Caco-2 (cell line): ENCODE measurements at regions of chr7 and their contacts with region 1.

Region 1: DNA sequence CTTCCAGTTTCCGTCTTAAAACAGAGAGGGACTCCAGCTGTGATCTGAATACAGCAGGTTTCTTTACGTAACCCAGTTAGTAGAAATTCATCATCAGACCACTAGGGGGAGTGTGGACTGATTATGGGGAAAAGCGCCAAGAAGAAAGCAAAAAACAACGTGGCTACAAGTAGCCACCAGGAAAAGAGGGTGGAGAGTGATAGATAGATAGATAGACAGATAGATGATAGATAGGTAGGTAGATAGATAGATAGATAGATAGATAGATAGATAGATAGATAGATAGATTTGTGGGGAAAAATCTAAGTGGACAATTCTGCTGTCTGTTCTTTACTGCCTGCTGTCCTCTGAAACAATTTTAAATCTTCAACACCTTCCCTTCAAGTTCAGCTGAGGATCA is 12.7 kb upstream of the AKR1B10 start:
- DNase-seq: peak in 1 of 2 experiments; percentile 76
- H3K4me3 ChIP-seq: no peak overlapping the region
- H3K4me3 Mint-ChIP-seq: no peak overlapping the region
- H3K27ac Mint-ChIP-seq: no peak overlapping the region
- H3K4me1 ChIP-seq: no peaks in the 10 kb centered on the region; the same call in 1 of the 2 replicates
- H3K4me1 Mint-ChIP-seq: peaks cover 7% of the 10 kb centered on the region
- H3K27me3 ChIP-seq: no peaks in the 10 kb centered on the region
- H3K27me3 Mint-ChIP-seq: peaks cover 14% of the 10 kb centered on the region
- CTCF ChIP-seq: peak; percentile 86 to 87

Region 2: GRCh38 chr7:134444198-134444871 is 70.3 kb before region 1 on chr7:
- CTCF ChIA-PET with region 1: interaction called, 5 read pairs
- POLR2A ChIA-PET with region 1: no interaction called
- intact Hi-C with region 1: loop called (anchors 2 kb)
- DNase-seq: peak in 1 of 2 experiments; percentile 32
- H3K4me3 ChIP-seq: no peak overlapping the region
- H3K4me3 Mint-ChIP-seq: no peak overlapping the region
- H3K27ac Mint-ChIP-seq: no peak overlapping the region
- H3K4me1 ChIP-seq: no peaks in the 10 kb centered on the region
- H3K4me1 Mint-ChIP-seq: no peaks in the 10 kb centered on the region
- H3K27me3 ChIP-seq: no peaks in the 10 kb centered on the region
- H3K27me3 Mint-ChIP-seq: no peaks in the 10 kb centered on the region
- CTCF ChIP-seq: no peak

Region 3: DNA sequence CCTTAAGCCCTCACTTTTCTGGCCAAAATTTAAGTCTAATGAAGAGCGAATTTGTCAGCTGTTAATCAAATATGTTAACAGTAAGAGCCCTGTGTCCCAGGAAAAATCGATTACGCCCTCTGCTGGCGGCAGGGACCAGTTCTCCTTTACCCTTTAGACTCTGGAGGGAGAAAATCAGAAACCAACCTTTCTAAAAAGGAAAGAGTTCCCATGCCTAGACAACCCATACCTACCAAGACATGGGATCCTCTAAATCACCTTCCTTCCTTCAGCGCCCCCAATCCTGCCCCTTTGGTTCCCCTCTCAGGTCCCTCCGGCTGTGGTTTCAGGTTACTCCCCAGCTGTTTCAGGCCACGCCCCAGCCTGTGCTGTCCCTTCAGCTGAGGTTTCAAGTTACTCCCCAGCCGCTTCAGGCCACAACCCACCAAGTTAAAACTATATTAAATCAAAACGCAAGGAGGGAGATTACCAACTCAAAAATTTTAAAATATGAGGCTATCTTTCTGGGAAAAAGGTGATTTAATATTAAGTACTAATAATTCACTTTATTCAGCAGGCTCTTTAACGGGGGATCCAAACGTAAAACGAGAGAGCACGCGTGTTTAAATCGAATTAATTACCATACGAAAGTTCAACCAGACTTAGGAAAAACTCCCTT is 32.9 kb after region 1 on chr7:
- CTCF ChIA-PET with region 1: no interaction called
- POLR2A ChIA-PET with region 1: no interaction called
- intact Hi-C with region 1: loop called (anchors 1 kb)
- DNase-seq: peak; percentile 60 to 68
- H3K4me3 ChIP-seq: 0 out of 2 replicates have a peak overlapping the region, but pooled peaks have one; percentile 4
- H3K4me3 Mint-ChIP-seq: peak overlapping the region; percentile 55
- H3K27ac Mint-ChIP-seq: no peak overlapping the region
- H3K4me1 ChIP-seq: no peaks in the 10 kb centered on the region
- H3K4me1 Mint-ChIP-seq: no peaks in the 10 kb centered on the region
- H3K27me3 ChIP-seq: no peaks in the 10 kb centered on the region
- H3K27me3 Mint-ChIP-seq: peaks cover 22% of the 10 kb centered on the region
- CTCF ChIP-seq: peak; percentile 77 to 84

Region 4: GRCh38 chr7:134605973-134606923 is 91.6 kb after region 1 on chr7:
- CTCF ChIA-PET with region 1: interaction called, 4 read pairs
- POLR2A ChIA-PET with region 1: no interaction called
- intact Hi-C with region 1: loop called (anchors 1 kb)
- DNase-seq: peak; percentile 47 to 59
- H3K4me3 ChIP-seq: no peak overlapping the region
- H3K4me3 Mint-ChIP-seq: no peak overlapping the region
- H3K27ac Mint-ChIP-seq: no peak overlapping the region
- H3K4me1 ChIP-seq: peaks cover 7% of the 10 kb centered on the region; the same call in 1 of the 2 replicates
- H3K4me1 Mint-ChIP-seq: peaks cover 7% of the 10 kb centered on the region
- H3K27me3 ChIP-seq: peaks cover under 1% of the 10 kb centered on the region
- H3K27me3 Mint-ChIP-seq: peaks cover 7% of the 10 kb centered on the region
- CTCF ChIP-seq: peak; percentile 90 to 91